Sciatic nerve (tissue), 2 donors: ENCODE measurements at regions of chr5 and their contacts with region 1.

Region 1: DNA sequence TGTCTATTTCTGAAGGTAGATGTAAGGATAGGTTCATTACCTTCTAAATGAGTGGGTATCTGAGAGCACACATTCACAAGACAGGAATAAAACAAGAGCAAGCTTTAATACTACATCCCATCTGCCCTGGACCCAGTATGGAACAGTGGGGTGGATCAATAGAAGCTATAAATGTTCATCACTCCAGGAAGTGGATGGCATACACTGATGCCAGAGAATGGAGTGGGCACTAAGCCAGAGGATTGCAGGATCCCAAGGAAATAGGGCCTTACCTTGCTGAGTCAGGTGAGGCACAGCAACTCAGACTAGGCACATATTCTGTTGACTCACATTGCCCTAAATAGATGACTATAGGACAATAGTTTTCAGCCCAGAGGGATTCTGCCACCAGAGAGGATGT is 21.3 kb upstream of the COX7C start:
- DNase-seq: no peak
- ATAC-seq: no peak

Region 2: DNA sequence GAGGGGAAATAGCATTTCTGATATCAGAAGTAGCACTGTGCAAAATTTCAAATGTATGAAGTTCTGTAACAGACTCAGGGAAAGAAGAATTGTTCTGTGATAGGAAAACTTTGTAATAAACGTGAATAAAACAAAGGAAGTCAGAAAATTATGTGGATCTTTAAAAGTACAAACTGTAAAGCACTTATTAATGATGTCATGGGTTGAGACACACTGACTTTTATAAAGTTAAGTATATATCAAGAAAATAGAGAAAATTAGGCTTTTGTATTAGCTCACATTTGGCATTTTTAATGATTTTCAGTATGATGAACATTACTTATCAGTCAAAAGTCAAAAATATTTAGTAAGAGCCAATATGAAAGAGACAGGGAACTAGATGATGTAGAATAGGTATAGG is 1130.1 kb before region 1 on chr5:
- intact Hi-C with region 1: loop called (anchors 5 kb)
- DNase-seq: no peak
- ATAC-seq: no peak

Region 3: DNA sequence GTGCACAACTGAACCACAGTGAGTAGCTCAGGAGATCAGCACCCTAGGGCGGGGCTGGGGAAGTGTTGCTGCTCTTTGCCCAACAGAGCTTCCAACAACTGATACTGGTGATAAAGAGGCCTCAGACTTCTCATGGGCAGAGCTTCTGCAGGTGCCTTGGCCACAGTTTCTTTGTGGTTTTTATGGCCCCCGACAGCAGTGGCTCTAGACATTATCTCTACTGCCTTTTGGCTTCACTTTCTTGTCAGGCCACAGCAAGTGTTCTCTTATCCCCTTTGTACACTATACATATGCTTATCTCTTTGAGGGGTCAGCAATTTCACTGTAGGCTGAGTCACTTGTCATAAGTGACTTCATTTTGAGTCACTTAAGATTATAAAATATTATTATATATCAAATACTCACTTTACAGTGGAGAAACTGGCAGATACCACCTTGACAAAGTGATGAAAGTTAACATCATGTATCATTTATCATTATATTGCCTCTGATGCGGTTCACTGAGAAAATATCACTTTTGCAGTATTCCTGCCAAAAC is 69.6 kb before region 1 on chr5:
- intact Hi-C with region 1: no loop called
- DNase-seq: no peak
- ATAC-seq: no peak

Region 4: DNA sequence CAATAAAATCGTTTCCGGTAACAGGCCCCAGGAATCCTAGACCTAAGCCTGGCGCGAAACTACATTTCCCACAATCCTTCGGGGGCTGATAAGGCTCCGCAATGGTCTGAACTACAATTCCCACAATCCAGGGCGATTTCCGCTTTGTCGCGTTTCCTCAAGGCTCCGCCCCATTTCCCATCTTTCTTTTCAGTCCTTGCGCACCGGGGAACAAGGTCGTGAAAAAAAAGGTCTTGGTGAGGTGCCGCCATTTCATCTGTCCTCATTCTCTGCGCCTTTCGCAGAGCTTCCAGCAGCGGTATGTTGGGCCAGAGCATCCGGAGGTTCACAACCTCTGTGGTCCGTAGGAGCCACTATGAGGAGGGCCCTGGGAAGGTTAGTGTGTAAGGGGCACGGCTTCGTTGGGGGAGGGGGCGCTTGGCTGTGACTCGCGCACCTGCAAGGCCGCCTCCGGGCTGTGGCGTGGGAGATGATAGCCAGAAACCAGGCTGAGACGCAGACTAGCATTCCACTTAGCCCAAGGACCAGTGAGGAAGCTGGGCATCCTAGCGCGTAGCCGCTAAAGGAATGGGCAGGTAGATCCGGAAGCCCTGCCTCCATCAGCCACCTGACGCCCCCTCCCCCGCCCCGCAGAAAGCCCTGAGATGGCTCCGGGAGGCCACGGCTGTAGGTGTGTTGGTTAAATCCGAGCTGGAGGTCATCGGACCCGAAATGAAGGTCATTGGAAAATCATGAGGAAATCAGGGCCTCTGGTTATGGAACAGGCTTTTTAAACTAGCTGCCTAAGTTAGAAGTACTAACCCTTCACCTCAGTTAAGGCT is 21.5 kb after region 1 on chr5 and contains the start of gene COX7C:
- intact Hi-C with region 1: no loop called
- DNase-seq: peak; percentile 93
- ATAC-seq: peak; percentile 99
- total RNA-seq, gene COX7C: 341 TPM